ENCODE measurements at regions of chr3 and their contacts with region 1.

Region 1: GRCh38 chr3:118884748-118885206 is 149.9 kb downstream of the IGSF11 start:
- DNase-seq: peak; percentile 73
- ATAC-seq: peak; percentile 78
- H3K4me3 Mint-ChIP-seq: no peak overlapping the region
- H3K27ac Mint-ChIP-seq: no peak overlapping the region
- H3K4me1 Mint-ChIP-seq: 0 out of 2 replicates have a peak, but pooled peaks cover 2% of the 10 kb centered on the region
- H3K27me3 Mint-ChIP-seq: no peaks in the 10 kb centered on the region
- CTCF ChIP-seq: peak; percentile 82

Region 2: GRCh38 chr3:118607915-118608820 is 276.6 kb before region 1 on chr3:
- CTCF ChIA-PET with region 1: no interaction called
- POLR2A ChIA-PET with region 1: no interaction called
- DNase-seq: no peak
- ATAC-seq: no peak
- H3K4me3 Mint-ChIP-seq: no peak overlapping the region
- H3K27ac Mint-ChIP-seq: no peak overlapping the region
- H3K4me1 Mint-ChIP-seq: peaks cover 5% of the 10 kb centered on the region
- H3K27me3 Mint-ChIP-seq: no peaks in the 10 kb centered on the region
- CTCF ChIP-seq: no peak

Region 3: DNA sequence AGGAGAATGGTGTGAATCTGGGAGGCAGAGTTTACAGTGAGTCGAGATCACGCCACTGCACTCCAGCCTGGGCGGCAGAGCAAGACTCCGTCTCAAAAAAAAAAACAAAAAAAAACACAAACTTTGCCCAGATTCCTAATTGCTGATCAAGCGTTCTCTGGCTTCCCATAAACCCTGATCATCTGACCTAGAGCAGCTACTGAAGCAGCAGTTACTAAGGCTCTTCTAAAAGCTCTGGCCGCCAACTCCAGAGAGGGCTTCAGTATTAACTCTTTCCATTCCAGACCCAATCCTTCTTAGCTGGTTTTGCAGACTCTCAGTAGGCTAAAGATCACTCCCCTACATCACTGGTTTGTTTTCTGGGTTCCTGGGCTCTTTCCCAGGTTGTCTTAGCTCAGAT is 51.7 kb before region 1 on chr3:
- CTCF ChIA-PET with region 1: no interaction called
- POLR2A ChIA-PET with region 1: no interaction called
- DNase-seq: no peak
- ATAC-seq: no peak
- H3K4me3 Mint-ChIP-seq: no peak overlapping the region
- H3K27ac Mint-ChIP-seq: no peak overlapping the region
- H3K4me1 Mint-ChIP-seq: no peaks in the 10 kb centered on the region
- H3K27me3 Mint-ChIP-seq: no peaks in the 10 kb centered on the region; the same call in 1 of the 2 replicates
- CTCF ChIP-seq: no peak

Region 4: GRCh38 chr3:118863731-118864322 is 20.9 kb before region 1 on chr3:
- CTCF ChIA-PET with region 1: interaction called, 11 read pairs
- POLR2A ChIA-PET with region 1: no interaction called
- DNase-seq: peak; percentile 47
- ATAC-seq: peak; percentile 100
- H3K4me3 Mint-ChIP-seq: no peak overlapping the region
- H3K27ac Mint-ChIP-seq: no peak overlapping the region
- H3K4me1 Mint-ChIP-seq: no peaks in the 10 kb centered on the region
- H3K27me3 Mint-ChIP-seq: no peaks in the 10 kb centered on the region
- CTCF ChIP-seq: peak; percentile 30; the same call in 1 of the 2 replicates

Region 5: DNA sequence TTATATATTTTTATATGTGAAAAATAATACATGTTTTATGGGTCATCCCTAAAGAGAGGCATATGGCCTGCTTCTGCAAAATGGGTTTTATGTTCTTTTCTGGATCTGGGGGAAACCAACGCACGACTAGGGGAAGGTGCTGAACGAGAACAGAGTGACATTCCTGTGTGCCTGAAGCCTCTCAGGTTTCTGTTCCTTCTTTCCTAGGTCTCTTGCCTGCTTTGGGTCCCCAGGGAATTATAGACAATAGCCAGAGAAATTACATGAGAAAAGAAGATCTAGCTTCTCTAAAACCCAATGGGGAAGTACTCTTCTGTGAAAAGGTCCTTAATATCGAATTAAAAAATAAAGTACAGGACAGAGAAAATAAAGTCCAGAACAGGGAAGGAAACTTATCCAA is 83.3 kb after region 1 on chr3:
- CTCF ChIA-PET with region 1: interaction called, 15 read pairs
- POLR2A ChIA-PET with region 1: no interaction called
- DNase-seq: no peak
- ATAC-seq: peak; percentile 95
- H3K4me3 Mint-ChIP-seq: no peak overlapping the region
- H3K27ac Mint-ChIP-seq: peak overlapping the region; percentile 20; the same call in 1 of the 2 replicates
- H3K4me1 Mint-ChIP-seq: peaks cover 49% of the 10 kb centered on the region
- H3K27me3 Mint-ChIP-seq: no peaks in the 10 kb centered on the region
- CTCF ChIP-seq: no peak

Region 6: DNA sequence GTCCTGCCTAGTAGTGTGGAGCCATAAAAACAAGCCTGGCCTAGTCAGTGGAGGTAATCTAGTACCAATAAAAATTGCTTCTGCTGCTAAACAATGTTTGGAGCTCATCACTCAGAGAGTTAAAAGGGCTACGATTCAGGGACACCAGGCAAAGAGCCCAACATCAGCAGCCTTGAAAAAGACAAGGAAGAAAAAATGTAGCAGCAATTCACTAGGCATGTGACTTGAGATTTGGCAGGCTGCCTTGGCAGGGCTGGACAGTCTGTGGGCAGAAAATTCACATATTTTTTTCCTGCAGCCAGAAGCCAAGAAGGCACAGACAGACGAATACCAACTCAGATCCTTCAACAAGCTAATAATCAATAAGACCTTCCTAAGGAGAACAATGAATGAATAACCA is 102.7 kb after region 1 on chr3:
- CTCF ChIA-PET with region 1: interaction called, 13 read pairs
- POLR2A ChIA-PET with region 1: no interaction called
- DNase-seq: no peak
- ATAC-seq: no peak
- H3K4me3 Mint-ChIP-seq: no peak overlapping the region
- H3K27ac Mint-ChIP-seq: no peak overlapping the region
- H3K4me1 Mint-ChIP-seq: peaks cover 67% of the 10 kb centered on the region
- H3K27me3 Mint-ChIP-seq: no peaks in the 10 kb centered on the region; the same call in 1 of the 2 replicates
- CTCF ChIP-seq: no peak

Region 7: GRCh38 chr3:119034256-119035013 is 149.7 kb after region 1 on chr3 and contains the start of gene IGSF11:
- CTCF ChIA-PET with region 1: interaction called, 42 read pairs
- POLR2A ChIA-PET with region 1: no interaction called
- DNase-seq: peak; percentile 76
- ATAC-seq: peak; percentile 82
- H3K4me3 Mint-ChIP-seq: peak within 1 kb of the TSS; percentile 90
- H3K27ac Mint-ChIP-seq: peak within 1 kb of the TSS; percentile 79
- H3K4me1 Mint-ChIP-seq: peaks cover 19% of the 10 kb centered on the region
- H3K27me3 Mint-ChIP-seq: peaks cover 30% of the 10 kb centered on the region
- CTCF ChIP-seq: no peak
- total RNA-seq, gene IGSF11: 1.6 to 2.0 TPM (median 1.7 TPM) in 3 replicates

Region 8: GRCh38 chr3:119084371-119085072 is 199.7 kb after region 1 on chr3:
- CTCF ChIA-PET with region 1: interaction called, 37 read pairs
- POLR2A ChIA-PET with region 1: no interaction called
- DNase-seq: no peak
- ATAC-seq: peak; percentile 26; the same call in 1 of the 2 replicates
- H3K4me3 Mint-ChIP-seq: no peak overlapping the region
- H3K27ac Mint-ChIP-seq: no peak overlapping the region
- H3K4me1 Mint-ChIP-seq: no peaks in the 10 kb centered on the region
- H3K27me3 Mint-ChIP-seq: no peaks in the 10 kb centered on the region
- CTCF ChIP-seq: no peak

Region 9: DNA sequence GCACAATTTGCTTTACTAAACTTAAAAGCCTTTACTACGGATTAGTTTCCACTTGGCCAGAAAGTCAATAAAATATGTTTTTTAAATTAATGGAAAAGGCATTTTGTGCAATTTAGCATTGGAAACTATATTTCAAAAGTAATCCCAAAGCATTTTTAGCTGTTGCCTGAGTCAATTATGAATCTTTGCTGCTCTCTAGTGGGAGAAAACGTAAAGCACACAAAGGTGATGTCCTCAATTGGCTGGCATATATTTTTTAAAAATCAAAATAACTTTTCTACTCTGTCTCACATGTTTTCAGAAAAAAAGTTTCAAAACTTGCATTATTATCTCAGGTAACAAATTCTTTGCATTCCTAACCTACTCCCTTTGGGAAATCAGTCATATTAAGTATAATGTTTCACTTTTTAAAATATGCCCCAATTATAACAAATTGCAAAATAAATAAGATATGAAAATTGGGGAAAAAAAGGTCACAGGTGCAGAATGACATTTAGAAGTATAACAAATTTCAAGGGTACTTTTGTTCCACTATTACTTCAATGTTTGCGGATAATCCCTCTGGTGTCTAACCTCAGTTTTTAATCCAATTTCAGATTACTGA is 213.9 kb after region 1 on chr3:
- CTCF ChIA-PET with region 1: interaction called, 235 read pairs
- POLR2A ChIA-PET with region 1: interaction called, 3 read pairs
- DNase-seq: no peak
- ATAC-seq: no peak
- H3K4me3 Mint-ChIP-seq: no peak overlapping the region
- H3K27ac Mint-ChIP-seq: no peak overlapping the region
- H3K4me1 Mint-ChIP-seq: no peaks in the 10 kb centered on the region
- H3K27me3 Mint-ChIP-seq: no peaks in the 10 kb centered on the region
- CTCF ChIP-seq: peak; percentile 66